Heart left ventricle (tissue), 16 donors: ENCODE measurements at regions of chr3 and their contacts with region 1.

Region 1: DNA sequence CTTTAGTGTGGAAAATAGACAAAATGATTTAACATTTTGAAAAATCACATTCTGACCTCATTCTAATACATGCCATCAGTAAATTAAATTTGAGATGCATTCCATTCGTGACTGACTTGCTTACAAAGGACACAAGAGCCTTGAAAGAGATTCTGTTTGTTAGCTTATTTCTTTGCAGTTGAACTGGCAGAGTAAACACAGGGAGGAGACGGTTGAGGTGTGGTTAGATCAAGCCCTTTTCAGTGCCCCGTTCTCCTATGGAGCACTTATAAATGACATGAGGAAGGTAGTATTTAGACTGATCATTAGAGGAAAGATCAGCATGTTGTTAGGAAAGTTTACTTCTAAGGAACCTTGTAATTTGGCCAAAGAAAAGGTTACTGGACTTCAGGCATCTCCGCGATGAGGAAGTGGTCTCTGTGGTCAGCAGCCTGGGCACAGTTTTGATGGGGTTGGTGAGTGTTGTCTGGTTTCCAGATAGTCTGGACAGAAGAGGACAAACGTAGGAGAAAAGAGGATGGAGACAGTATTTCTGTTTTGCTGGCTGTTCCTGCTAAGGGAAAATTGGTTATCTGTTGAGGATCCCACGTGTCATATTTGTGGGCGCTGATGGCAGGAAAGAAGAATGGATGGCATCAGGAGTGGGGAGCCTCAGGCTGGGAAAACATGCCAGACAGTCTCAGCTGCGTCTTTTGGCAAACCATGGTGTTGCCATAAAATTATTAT is 328.9 kb upstream of the TBL1XR1 start:
- DNase-seq: no peak
- ATAC-seq: no peak
- H3K4me3 ChIP-seq: no peak overlapping the region
- H3K27ac ChIP-seq: no peak overlapping the region
- H3K4me1 ChIP-seq: peaks cover 0 to 17% (median 0%) of the 10 kb centered on the region in 12 donors
- H3K27me3 ChIP-seq: no peaks in the 10 kb centered on the region
- CTCF ChIP-seq: no peak
- POLR2A ChIP-seq: no peak

Region 2: GRCh38 chr3:177580437-177580836 is 54.3 kb after region 1 on chr3:
- intact Hi-C with region 1: loop called in 1 of 10 experiments (anchors 5 kb)
- DNase-seq: no peak
- ATAC-seq: no peak
- H3K4me3 ChIP-seq: no peak overlapping the region
- H3K27ac ChIP-seq: no peak overlapping the region
- H3K4me1 ChIP-seq: peaks cover 0 to 9% (median 0%) of the 10 kb centered on the region in 12 donors
- H3K27me3 ChIP-seq: no peaks in the 10 kb centered on the region
- CTCF ChIP-seq: no peak
- POLR2A ChIP-seq: no peak

Region 3: GRCh38 chr3:177589911-177590381 is 63.8 kb after region 1 on chr3:
- intact Hi-C with region 1: loop called in 1 of 10 experiments (anchors 5 kb)
- DNase-seq: no peak
- ATAC-seq: peak; percentile 44 to 84 (median 66)
- H3K4me3 ChIP-seq: no peak overlapping the region
- H3K27ac ChIP-seq: peak overlapping the region in 4 of 12 donors; percentile 16 to 30 (median 18)
- H3K4me1 ChIP-seq: peaks cover 0 to 49% (median 2%) of the 10 kb centered on the region in 12 donors
- H3K27me3 ChIP-seq: no peaks in the 10 kb centered on the region
- CTCF ChIP-seq: no peak
- POLR2A ChIP-seq: no peak